Dendritic cell treated with granulocyte-macrophage colony-stimulating factor and Interleukin-4, amounts not matched to agents 40 ng/mL and 50 ng/mL, for 4 days (primary cell): ENCODE measurements at regions of chr12 and their contacts with region 1.

Region 1: GRCh38 chr12:109020796-109021380 is at the start of gene SVOP:
- H3K4me3 Mint-ChIP-seq: no peak within 1 kb of the TSS
- H3K27ac Mint-ChIP-seq: no peak within 1 kb of the TSS
- H3K4me1 Mint-ChIP-seq: peaks cover 6% of the 10 kb centered on the region
- H3K27me3 Mint-ChIP-seq: peaks cover 15% of the 10 kb centered on the region

Region 2: GRCh38 chr12:108995370-108995992 is 25.4 kb before region 1 on chr12:
- intact Hi-C with region 1: no loop called
- H3K4me3 Mint-ChIP-seq: no peak overlapping the region
- H3K27ac Mint-ChIP-seq: no peak overlapping the region
- H3K4me1 Mint-ChIP-seq: no peaks in the 10 kb centered on the region
- H3K27me3 Mint-ChIP-seq: peaks cover 7% of the 10 kb centered on the region

Region 3: DNA sequence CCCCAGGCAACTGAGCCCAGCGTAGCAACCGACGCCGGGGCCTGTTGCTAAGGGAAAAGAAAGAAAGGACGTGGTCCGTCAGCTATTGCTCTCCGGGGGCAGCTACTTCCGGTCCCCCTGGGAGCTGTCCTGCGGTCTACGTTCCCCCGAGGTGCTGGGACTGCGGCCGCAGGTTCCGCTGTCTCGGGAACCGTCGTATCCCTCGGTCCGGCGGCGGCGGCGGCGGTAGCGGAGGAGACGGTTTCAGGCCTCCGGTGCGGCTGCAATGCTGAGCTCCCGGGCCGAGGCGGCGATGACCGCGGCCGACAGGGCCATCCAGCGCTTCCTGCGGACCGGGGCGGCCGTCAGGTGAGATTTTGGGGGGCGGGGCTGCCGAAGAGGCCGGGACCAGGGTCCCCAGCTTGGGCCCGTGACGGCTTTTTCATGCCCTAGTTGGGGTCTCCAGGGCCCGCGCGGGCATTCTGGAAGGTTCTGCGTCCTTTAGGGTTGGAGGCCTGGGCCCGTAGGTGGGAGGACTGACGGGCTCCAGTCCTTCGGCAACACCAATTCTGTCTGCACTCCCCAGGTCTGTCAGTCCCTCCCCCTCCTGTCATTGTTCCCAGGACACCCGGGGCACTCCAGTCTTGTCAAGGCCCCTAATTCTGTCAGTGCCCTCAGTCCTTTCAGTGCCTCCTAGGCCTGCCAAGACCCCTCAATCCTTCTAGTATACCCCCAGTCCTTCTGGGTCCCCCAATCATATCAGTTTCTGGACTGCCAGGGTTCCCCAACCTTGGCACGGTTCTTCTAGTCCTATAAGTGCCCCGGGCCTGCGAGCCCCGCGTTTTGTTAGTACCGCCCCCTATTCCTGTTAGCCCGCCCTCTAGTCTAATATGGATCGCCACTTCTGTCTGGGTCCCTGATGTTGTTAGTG is 31.8 kb after region 1 on chr12 and contains the start of gene USP30:
- intact Hi-C with region 1: loop called (anchors 2 kb)
- H3K4me3 Mint-ChIP-seq: peak within 1 kb of the TSS; percentile 83
- H3K27ac Mint-ChIP-seq: peak within 1 kb of the TSS; percentile 85
- H3K4me1 Mint-ChIP-seq: peaks cover 25% of the 10 kb centered on the region
- H3K27me3 Mint-ChIP-seq: peaks cover 2% of the 10 kb centered on the region